PC-9 (cell line): ENCODE measurements at regions of chr6 and their contacts with region 1.

Region 1: DNA sequence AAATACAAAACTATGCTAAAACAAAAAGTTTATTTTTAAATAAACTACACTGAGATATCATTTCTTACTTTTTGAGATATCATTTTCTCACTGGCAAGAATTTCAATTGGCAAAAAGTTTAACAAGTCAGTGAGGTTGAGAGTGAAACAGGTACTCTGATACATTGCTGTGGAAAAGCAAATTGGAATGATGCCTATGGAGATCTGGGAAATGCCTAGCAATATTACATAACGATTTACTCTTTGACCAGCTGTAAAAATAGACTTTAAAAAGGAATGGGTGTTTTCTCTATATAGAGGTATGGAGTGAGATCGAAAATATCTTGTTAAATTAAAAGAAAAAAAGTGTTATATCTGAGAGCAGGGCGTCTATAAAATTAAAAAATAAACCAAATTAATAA is 16.9 kb downstream of the CGAS start:
- DNase-seq: no peak
- H3K4me3 ChIP-seq: no peak overlapping the region
- H3K27ac ChIP-seq: no peak overlapping the region
- H3K4me1 ChIP-seq: no peaks in the 10 kb centered on the region
- H3K27me3 ChIP-seq: no peaks in the 10 kb centered on the region
- CTCF ChIP-seq: no peak

Region 2: GRCh38 chr6:73409395-73409794 is 25.8 kb before region 1 on chr6:
- CTCF ChIA-PET with region 1: no interaction called
- POLR2A ChIA-PET with region 1: interaction called, 23 read pairs
- intact Hi-C with region 1: no loop called
- DNase-seq: peak in 1 of 2 experiments; percentile 88
- H3K4me3 ChIP-seq: no peak overlapping the region
- H3K27ac ChIP-seq: 0 out of 2 replicates have a peak overlapping the region, but pooled peaks have one; percentile 8
- H3K4me1 ChIP-seq: peaks cover 7% of the 10 kb centered on the region; the same call in 1 of the 2 replicates
- H3K27me3 ChIP-seq: no peaks in the 10 kb centered on the region
- CTCF ChIP-seq: no peak

Region 3: DNA sequence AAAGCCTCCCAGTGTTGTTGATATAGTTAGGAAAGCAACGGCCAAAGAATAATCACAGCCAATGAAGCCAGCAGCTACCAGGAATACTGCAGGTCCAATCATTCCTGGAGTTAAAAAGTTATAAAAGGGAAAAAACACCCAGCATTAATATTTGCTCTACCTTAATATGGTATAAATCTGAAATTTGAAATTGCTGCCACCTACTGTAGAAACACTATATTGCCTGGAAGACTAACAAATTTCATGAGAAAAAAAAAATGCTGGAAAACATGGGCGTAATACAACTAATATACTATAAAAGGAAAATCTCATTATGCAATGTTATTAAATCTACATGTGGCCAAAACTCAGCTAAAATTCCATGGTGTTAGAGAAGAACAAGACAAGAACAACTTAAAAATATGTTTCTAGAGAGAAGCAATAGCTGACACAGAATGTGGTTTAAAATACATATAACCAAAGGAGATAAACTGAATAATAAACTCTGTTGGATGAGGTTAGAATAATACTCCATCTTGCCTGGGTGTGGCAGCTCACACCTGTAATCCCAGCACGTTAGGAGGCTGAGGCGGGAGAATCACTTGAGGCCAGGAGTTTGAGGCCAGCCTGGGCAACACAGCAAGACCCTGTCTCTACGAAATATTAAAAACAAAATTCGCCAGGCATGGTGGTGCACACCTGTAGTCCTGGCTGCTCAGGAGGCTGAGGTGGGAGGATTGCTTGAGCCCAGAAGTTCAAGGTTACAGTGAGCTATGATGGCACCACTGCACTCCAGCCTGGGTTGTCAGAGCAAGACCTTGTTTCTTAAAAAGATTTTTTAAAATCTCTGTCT is 175.4 kb after region 1 on chr6:
- CTCF ChIA-PET with region 1: interaction called, 7 read pairs
- POLR2A ChIA-PET with region 1: interaction called, 16 read pairs
- intact Hi-C with region 1: no loop called
- DNase-seq: peak in 1 of 2 experiments; percentile 56
- H3K4me3 ChIP-seq: no peak overlapping the region
- H3K27ac ChIP-seq: peak overlapping the region; percentile 42
- H3K4me1 ChIP-seq: peaks cover 10% of the 10 kb centered on the region; the same call in 1 of the 2 replicates
- H3K27me3 ChIP-seq: no peaks in the 10 kb centered on the region
- CTCF ChIP-seq: peak; percentile 77